ENCODE measurements at regions of chr15 and their contacts with region 1.

Region 1: DNA sequence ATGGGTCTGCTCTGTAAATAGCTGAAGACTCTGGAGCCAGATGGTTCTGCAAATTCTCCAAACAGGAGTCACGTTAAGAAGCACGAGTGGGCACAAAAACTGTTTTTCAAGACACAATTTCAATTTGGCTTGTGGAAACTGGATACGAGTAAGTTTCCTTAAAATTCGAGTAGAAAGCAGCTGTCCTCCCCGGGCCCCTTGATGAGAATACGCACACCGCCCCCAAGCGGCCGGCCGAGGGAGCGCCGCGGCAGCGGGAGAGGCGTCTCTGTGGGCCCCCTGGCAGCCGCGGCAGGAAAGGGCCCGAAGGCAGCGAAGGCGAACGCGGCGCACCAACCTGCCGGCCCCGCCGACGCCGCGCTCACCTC is 778 bp upstream of the THBS1 start:
- DNase-seq: peak; percentile 90
- ATAC-seq: peak; percentile 95
- H3K4me3 Mint-ChIP-seq: peak overlapping the region; percentile 35
- H3K27ac Mint-ChIP-seq: no peak overlapping the region
- H3K4me1 Mint-ChIP-seq: peaks cover 15% of the 10 kb centered on the region
- H3K27me3 Mint-ChIP-seq: peaks cover 61% of the 10 kb centered on the region

Region 2: GRCh38 chr15:38707802-38708671 is 872.1 kb before region 1 on chr15:
- CTCF ChIA-PET with region 1: interaction called, 12 read pairs
- DNase-seq: peak; percentile 54
- ATAC-seq: peak; percentile 81
- H3K4me3 Mint-ChIP-seq: no peak overlapping the region
- H3K27ac Mint-ChIP-seq: no peak overlapping the region
- H3K4me1 Mint-ChIP-seq: peaks cover 27% of the 10 kb centered on the region
- H3K27me3 Mint-ChIP-seq: no peaks in the 10 kb centered on the region

Region 3: GRCh38 chr15:39312984-39313383 is 267.1 kb before region 1 on chr15:
- CTCF ChIA-PET with region 1: interaction called, 16 read pairs
- DNase-seq: no peak
- ATAC-seq: no peak
- H3K4me3 Mint-ChIP-seq: no peak overlapping the region
- H3K27ac Mint-ChIP-seq: no peak overlapping the region
- H3K4me1 Mint-ChIP-seq: no peaks in the 10 kb centered on the region
- H3K27me3 Mint-ChIP-seq: peaks cover 25% of the 10 kb centered on the region

Region 4: DNA sequence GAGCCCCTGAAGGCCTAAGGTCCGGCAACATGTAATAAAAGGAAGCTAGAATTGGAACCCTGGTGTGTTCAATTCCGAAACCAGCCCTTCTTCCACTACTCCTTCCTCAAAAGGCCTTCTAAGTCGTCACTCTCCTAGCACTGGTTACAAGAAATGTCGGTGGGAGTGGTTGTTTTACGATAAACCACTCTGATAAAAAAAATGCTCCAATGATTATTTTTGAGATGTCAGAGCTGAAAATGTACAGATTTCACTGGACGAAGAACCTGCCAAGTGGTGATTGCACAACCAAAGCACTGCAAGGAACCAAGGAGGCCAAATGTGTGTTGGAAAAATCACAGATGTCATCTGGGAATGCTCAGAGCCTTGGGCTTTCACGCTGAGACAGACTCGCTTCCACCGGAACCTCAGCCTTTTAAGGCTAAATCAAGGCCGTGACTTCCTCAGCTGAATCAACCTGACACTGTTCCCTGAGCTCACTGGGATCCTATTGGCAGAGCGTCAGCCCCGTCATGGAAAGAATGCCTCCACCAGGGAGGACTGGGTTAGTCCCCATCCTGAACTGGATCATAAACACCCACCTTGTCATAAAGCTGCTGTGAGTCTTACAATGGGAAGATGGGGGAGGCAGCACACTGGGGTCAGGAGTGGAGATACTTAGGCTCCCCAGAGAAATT is 107.3 kb before region 1 on chr15:
- CTCF ChIA-PET with region 1: no interaction called
- DNase-seq: no peak
- ATAC-seq: no peak
- H3K4me3 Mint-ChIP-seq: no peak overlapping the region
- H3K27ac Mint-ChIP-seq: no peak overlapping the region
- H3K4me1 Mint-ChIP-seq: no peaks in the 10 kb centered on the region
- H3K27me3 Mint-ChIP-seq: peaks cover 11% of the 10 kb centered on the region

Region 5: DNA sequence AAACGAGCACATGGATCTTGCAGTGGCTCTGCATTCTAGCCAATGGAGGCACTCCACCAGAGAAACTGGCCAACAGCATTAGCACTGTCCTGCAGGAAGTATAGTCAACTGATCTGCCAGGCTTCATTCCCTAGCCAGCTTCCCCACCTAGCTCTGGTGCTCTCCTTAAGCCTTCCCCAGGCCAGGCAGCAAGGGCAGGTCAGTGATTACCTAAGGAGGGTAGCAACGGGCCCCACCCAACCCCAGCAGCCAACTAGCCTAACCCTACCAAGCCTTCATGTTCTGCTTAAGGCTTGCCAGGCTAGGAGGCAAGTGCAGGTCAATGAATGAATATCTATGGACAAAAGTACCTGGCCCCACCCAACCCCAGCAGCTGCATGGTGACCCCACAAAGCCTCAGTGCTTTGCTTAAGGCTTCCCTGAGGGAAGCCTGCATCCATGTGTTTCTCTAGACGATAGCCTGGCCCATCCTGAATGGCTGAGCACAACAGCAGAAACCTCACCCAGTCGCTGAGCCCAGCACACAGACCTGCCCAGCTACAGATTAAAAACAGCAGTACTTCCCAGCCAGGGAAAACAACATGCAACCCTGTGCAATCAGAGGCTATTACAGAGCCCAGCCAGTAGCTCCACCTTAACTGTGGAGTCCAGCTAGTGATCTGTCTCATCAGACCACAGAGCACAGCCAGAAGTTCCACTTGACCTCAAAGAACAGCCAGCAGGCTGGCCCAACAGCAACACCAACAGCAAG is 29.2 kb after region 1 on chr15:
- CTCF ChIA-PET with region 1: interaction called, 10 read pairs
- DNase-seq: no peak
- ATAC-seq: no peak
- H3K4me3 Mint-ChIP-seq: no peak overlapping the region
- H3K27ac Mint-ChIP-seq: peak overlapping the region; percentile 67
- H3K4me1 Mint-ChIP-seq: peaks cover 16% of the 10 kb centered on the region
- H3K27me3 Mint-ChIP-seq: no peaks in the 10 kb centered on the region

Region 6: DNA sequence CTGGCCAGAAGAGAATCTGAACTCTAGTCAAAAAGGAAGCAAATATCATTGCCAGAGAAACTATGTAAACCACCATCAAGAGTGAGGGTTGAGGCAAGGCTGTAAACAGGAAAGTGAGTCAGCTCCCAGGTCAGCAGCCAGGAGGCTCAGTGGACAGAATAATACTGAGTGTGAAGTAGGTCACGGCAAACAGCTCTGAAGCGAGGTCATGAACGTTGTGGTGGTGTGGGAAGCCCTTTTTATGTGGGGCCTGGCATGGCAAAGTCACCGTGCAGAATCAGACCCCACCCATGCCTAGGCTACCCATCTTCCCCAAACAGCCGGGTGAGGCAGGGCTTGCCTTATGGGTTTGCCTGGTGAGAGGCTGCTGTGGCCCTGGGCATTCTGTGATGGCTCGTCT is 44.7 kb after region 1 on chr15:
- CTCF ChIA-PET with region 1: interaction called, 18 read pairs
- DNase-seq: peak; percentile 92
- ATAC-seq: peak; percentile 83
- H3K4me3 Mint-ChIP-seq: peak overlapping the region; percentile 62
- H3K27ac Mint-ChIP-seq: peak overlapping the region; percentile 100
- H3K4me1 Mint-ChIP-seq: peaks cover 80% of the 10 kb centered on the region
- H3K27me3 Mint-ChIP-seq: no peaks in the 10 kb centered on the region

Region 7: GRCh38 chr15:39728845-39729244 is 148.7 kb after region 1 on chr15:
- CTCF ChIA-PET with region 1: no interaction called
- DNase-seq: no peak
- ATAC-seq: no peak
- H3K4me3 Mint-ChIP-seq: no peak overlapping the region
- H3K27ac Mint-ChIP-seq: no peak overlapping the region
- H3K4me1 Mint-ChIP-seq: no peaks in the 10 kb centered on the region
- H3K27me3 Mint-ChIP-seq: peaks cover 8% of the 10 kb centered on the region

Measured in activated CD8-positive, alpha-beta memory T cell treated with anti-CD3 and anti-CD28 coated beads, Interleukin-2, amount 10 ng/mL, durations not matched to agents 7 days and 5 days (primary cell).